Endothelial cell of umbilical vein (primary cell): ENCODE measurements at regions of chr7 and their contacts with region 1.

Region 1: GRCh38 chr7:23334482-23335056 is 35.4 kb downstream of the MALSU1 start:
- DNase-seq: peak; percentile 99
- H3K4me3 ChIP-seq: no peak overlapping the region
- H3K27ac ChIP-seq: peak overlapping the region; percentile 93
- H3K4me1 ChIP-seq: peaks cover 46% of the 10 kb centered on the region
- H3K27me3 ChIP-seq: no peaks in the 10 kb centered on the region
- CTCF ChIP-seq: no peak
- POLR2A ChIP-seq: peak; percentile 76

Region 2: GRCh38 chr7:23347682-23348180 is 13.2 kb after region 1 on chr7:
- CTCF ChIA-PET with region 1: interaction called, 11 read pairs
- POLR2A ChIA-PET with region 1: interaction called, 6 read pairs
- dilution Hi-C with region 1: no loop called
- intact Hi-C with region 1: loop called (anchors 1 kb)
- DNase-seq: peak; percentile 88
- H3K4me3 ChIP-seq: peak overlapping the region; percentile 27 to 67 (median 61)
- H3K27ac ChIP-seq: peak overlapping the region; percentile 88
- H3K4me1 ChIP-seq: peaks cover 80% of the 10 kb centered on the region
- H3K27me3 ChIP-seq: no peaks in the 10 kb centered on the region
- CTCF ChIP-seq: no peak
- POLR2A ChIP-seq: peak; percentile 44

Region 3: GRCh38 chr7:23373151-23374004 is 38.8 kb after region 1 on chr7:
- CTCF ChIA-PET with region 1: no interaction called
- POLR2A ChIA-PET with region 1: no interaction called
- dilution Hi-C with region 1: no loop called
- intact Hi-C with region 1: loop called (anchors 1 kb)
- DNase-seq: peak; percentile 92
- H3K4me3 ChIP-seq: no peak overlapping the region
- H3K27ac ChIP-seq: peak overlapping the region; percentile 69
- H3K4me1 ChIP-seq: peaks cover 55% of the 10 kb centered on the region
- H3K27me3 ChIP-seq: no peaks in the 10 kb centered on the region
- CTCF ChIP-seq: no peak
- POLR2A ChIP-seq: peak; percentile 39